ENCODE measurements at regions of chr15 and their contacts with region 1.

Region 1: DNA sequence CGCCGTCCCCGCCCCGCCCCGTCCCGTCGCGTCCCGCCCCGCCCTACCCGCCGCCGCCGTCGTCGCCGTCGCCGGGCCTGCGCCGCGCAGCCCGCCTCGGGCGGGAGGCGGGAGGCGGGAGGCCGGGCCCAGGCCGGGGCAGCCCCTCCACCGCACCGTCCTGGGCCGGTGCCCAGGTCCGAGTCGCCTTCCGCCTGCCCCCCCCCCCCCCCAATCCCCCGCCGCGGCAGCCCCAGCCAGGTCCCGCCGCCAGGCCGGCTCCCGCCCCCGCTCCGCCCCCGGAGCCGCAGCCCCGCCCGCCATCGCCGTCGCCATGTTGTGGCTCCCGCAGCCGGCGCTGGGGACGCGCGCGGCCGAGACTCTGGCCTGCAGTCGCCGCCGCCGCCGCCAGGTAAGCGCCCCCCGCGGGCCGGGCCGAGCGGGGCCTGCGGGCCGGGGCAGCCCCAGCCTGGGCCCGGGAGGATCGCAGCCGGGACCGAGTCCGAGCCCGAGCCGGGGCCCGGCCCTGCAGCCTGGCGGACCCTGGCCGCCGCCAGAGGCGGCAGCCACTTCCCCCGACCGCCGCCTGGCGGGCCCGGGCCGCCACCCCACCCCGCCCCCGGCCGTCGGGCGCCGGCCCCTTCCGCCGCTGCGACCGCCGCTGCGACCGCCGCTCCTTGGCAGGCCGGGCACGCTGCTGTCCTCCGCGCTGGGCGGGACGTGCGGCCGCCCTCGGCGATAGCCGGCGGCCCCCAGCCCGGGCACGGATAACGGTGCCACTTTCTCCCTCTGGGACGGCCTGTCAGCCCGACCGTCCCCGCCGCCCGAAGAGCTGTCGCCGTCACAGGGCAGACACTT is at the start of gene ZNF592:
- DNase-seq: peak; percentile 64 to 83
- ATAC-seq: peak; percentile 63 to 70
- H3K4me3 ChIP-seq: peak within 1 kb of the TSS; percentile 83 to 96 (median 91)
- H3K27ac ChIP-seq: peak within 1 kb of the TSS; percentile 98 to 100 (median 100)
- H3K4me1 ChIP-seq: peaks cover 64 to 65% of the 10 kb centered on the region in 2 donors
- H3K27me3 ChIP-seq: no peaks in the 10 kb centered on the region
- CTCF ChIP-seq: peak in 4 of 5 experiments; percentile 64 to 85 (median 68)
- POLR2A ChIP-seq: peak; percentile 82 to 84
- total RNA-seq, gene ZNF592: 30.0 to 49.2 (median 33.8) TPM

Region 2: GRCh38 chr15:84600851-84601838 is 147.3 kb before region 1 on chr15 and contains the start of gene ZSCAN2:
- in situ Hi-C with region 1: no loop called
- intact Hi-C with region 1: loop called (anchors 2 kb)
- DNase-seq: peak; percentile 93 to 96
- ATAC-seq: peak; percentile 93 to 97
- H3K4me3 ChIP-seq: peak within 1 kb of the TSS; percentile 95 to 98 (median 96)
- H3K27ac ChIP-seq: peak within 1 kb of the TSS; percentile 82 to 88 (median 86)
- H3K4me1 ChIP-seq: peaks cover 6 to 9% of the 10 kb centered on the region in 2 donors
- H3K27me3 ChIP-seq: no peaks in the 10 kb centered on the region
- CTCF ChIP-seq: no peak
- POLR2A ChIP-seq: peak in 1 of 2 donors; percentile 13
- total RNA-seq, gene ZSCAN2: 6.1 to 10.3 (median 8.6) TPM

Region 3: GRCh38 chr15:84658080-84658787 is 90.3 kb before region 1 on chr15 and contains the start of gene NMB:
- in situ Hi-C with region 1: no loop called
- intact Hi-C with region 1: loop called (anchors 2 kb)
- DNase-seq: peak; percentile 45 to 69
- ATAC-seq: peak; percentile 49 to 51
- H3K4me3 ChIP-seq: peak within 1 kb of the TSS; percentile 54 to 85 (median 58)
- H3K27ac ChIP-seq: peak within 1 kb of the TSS; percentile 74 to 86 (median 83)
- H3K4me1 ChIP-seq: peaks cover 12 to 20% of the 10 kb centered on the region in 2 donors
- H3K27me3 ChIP-seq: no peaks in the 10 kb centered on the region
- CTCF ChIP-seq: peak; percentile 30 to 88 (median 60)
- POLR2A ChIP-seq: no peak
- total RNA-seq, gene NMB: 0.94 to 1.6 (median 1.6) TPM in 3 of 4 donors, not detected in the other

Region 4: DNA sequence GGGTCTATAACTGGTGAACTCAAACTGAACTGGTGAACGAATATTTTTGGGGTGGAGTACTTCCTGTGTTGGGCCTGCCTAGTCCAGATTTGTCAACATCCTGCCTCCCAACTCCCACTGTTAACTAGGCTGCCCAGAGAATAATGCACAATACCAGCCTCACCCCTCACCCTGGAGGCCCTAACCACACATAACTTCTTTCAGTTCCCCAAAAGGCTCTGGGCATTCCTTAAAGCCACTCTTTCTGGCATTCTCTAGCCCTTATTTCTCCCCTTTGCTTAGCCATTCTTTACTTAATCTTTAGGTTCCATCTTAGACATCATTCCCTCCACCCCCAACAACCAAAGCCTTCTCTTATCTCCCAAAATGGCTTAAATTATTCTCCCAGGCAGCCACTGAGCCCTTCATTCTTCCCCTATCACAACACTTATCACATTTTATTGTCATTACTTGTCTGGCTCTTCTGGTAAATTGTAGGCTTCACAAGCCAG is 23.4 kb before region 1 on chr15:
- in situ Hi-C with region 1: no loop called
- intact Hi-C with region 1: no loop called
- DNase-seq: peak in 1 of 2 donors; percentile 5
- ATAC-seq: peak; percentile 50 to 51
- H3K4me3 ChIP-seq: no peak overlapping the region
- H3K27ac ChIP-seq: peak overlapping the region; percentile 21 to 71 (median 35)
- H3K4me1 ChIP-seq: peaks cover 0 to 3% of the 10 kb centered on the region in 2 donors
- H3K27me3 ChIP-seq: no peaks in the 10 kb centered on the region
- CTCF ChIP-seq: no peak
- POLR2A ChIP-seq: no peak

Region 5: GRCh38 chr15:84783496-84784251 is 35.2 kb after region 1 on chr15:
- in situ Hi-C with region 1: no loop called
- intact Hi-C with region 1: loop called (anchors 5 kb)
- DNase-seq: no peak
- ATAC-seq: no peak
- H3K4me3 ChIP-seq: no peak overlapping the region
- H3K27ac ChIP-seq: peak overlapping the region; percentile 77 to 95 (median 82)
- H3K4me1 ChIP-seq: peaks cover 49 to 51% of the 10 kb centered on the region in 2 donors
- H3K27me3 ChIP-seq: no peaks in the 10 kb centered on the region
- CTCF ChIP-seq: no peak
- POLR2A ChIP-seq: no peak

Region 6: DNA sequence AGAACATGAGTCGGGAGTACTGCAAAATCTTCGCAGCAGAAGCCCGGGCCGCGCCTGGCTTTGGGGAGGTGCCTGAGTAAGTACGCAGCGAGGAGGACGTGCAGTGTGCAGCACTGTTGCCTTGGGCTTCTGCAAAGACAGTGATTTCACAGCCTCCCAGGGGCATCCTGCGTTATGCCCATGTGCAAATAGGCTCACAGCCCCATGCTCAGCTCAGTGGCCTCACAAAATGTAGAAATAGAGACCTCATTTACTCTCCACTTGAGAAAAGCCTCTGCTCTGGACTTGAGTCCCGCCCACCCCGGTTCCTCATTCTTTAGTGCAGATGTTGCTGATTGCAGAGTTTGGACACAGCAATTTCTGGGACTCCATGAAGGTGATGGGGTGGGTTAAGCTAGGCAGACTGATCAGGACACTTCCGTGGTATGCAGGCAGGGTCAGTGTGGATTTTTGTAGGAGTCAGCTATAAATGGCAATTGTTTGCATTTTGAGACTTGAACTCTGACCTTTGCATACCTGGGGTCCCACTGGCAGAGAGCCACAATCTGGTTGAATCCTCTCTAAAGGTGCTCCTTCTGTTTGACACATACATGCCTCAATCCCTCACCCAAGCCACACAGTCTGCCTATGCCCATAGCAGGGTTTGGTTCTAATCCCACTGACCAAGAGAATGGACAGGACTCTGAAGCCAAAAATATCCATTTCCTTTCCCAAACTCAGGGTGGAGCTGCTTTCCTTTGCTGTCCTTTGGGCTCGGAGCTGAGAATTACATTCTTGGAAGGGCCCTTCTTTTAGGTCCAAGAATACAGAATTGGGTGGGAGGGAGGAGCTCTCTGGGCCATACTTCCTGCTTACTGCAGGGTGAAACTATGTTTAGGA is 115.3 kb after region 1 on chr15:
- in situ Hi-C with region 1: no loop called
- intact Hi-C with region 1: no loop called
- DNase-seq: no peak
- ATAC-seq: no peak
- H3K4me3 ChIP-seq: no peak overlapping the region
- H3K27ac ChIP-seq: peak overlapping the region; percentile 21 to 58 (median 45)
- H3K4me1 ChIP-seq: peaks cover 4 to 10% of the 10 kb centered on the region in 2 donors
- H3K27me3 ChIP-seq: no peaks in the 10 kb centered on the region
- CTCF ChIP-seq: no peak
- POLR2A ChIP-seq: no peak

Region 7: GRCh38 chr15:84929744-84930371 is 181.4 kb after region 1 on chr15:
- in situ Hi-C with region 1: no loop called
- intact Hi-C with region 1: loop called (anchors 5 kb)
- DNase-seq: no peak
- ATAC-seq: no peak
- H3K4me3 ChIP-seq: no peak overlapping the region
- H3K27ac ChIP-seq: no peak overlapping the region
- H3K4me1 ChIP-seq: peaks cover 12 to 16% of the 10 kb centered on the region in 2 donors
- H3K27me3 ChIP-seq: no peaks in the 10 kb centered on the region
- CTCF ChIP-seq: no peak
- POLR2A ChIP-seq: no peak

Region 8: DNA sequence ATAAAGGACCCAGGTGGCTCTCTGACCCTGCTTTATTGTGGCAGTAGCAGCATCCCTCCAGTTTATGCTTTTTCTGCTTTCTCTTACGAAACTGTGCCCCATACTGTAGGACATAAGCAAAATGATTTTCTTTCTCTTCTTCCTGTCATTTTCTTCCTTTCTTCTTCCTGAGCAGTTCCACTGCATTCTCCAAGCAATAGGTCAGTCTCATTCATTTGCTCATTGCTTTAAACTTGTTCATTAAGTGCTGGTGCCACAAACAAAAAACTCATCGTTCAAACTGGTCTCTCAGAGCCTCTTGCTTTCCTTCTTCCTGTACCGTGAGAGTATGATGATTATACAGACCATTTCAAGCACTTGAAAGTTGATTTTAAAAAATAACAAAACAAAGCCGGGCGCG is 299.9 kb after region 1 on chr15:
- in situ Hi-C with region 1: no loop called
- intact Hi-C with region 1: no loop called
- DNase-seq: no peak
- ATAC-seq: no peak
- H3K4me3 ChIP-seq: no peak overlapping the region
- H3K27ac ChIP-seq: peak overlapping the region; percentile 54 to 76 (median 71)
- H3K4me1 ChIP-seq: peaks cover 26 to 34% of the 10 kb centered on the region in 2 donors
- H3K27me3 ChIP-seq: no peaks in the 10 kb centered on the region
- CTCF ChIP-seq: no peak
- POLR2A ChIP-seq: no peak

Measured in gastrocnemius medialis (tissue), 4 donors.